Sigmoid colon (tissue), 7 donors: ENCODE measurements at regions of chr19 and their contacts with region 1.

Region 1: GRCh38 chr19:29610563-29611271 is 4.6 kb downstream of the POP4 start:
- DNase-seq: peak; percentile 89
- H3K4me3 ChIP-seq: no peak overlapping the region
- H3K27ac ChIP-seq: no peak overlapping the region
- H3K4me1 ChIP-seq: peaks cover 0 to 11% (median 8%) of the 10 kb centered on the region in 4 donors
- H3K27me3 ChIP-seq: no peaks in the 10 kb centered on the region
- CTCF ChIP-seq: peak; percentile 70 to 81 (median 74)
- EP300 ChIP-seq: no peak
- POLR2A ChIP-seq: no peak

Region 2: GRCh38 chr19:29212648-29213573 is 397.8 kb before region 1 on chr19 and contains the start of gene UQCRFS1:
- intact Hi-C with region 1: loop called (anchors 5 kb)
- DNase-seq: peak; percentile 97
- H3K4me3 ChIP-seq: peak within 1 kb of the TSS; percentile 82 to 99 (median 91)
- H3K27ac ChIP-seq: peak within 1 kb of the TSS; percentile 93 to 98 (median 96)
- H3K4me1 ChIP-seq: peaks cover 0 to 36% (median 25%) of the 10 kb centered on the region in 4 donors
- H3K27me3 ChIP-seq: no peaks in the 10 kb centered on the region
- CTCF ChIP-seq: no peak
- EP300 ChIP-seq: peak in 1 of 4 donors; percentile 58
- POLR2A ChIP-seq: peak; percentile 66 to 72
- total RNA-seq, gene UQCRFS1: 30.2 to 46.4 (median 41.4) TPM

Region 3: GRCh38 chr19:29665215-29665825 is 54.6 kb after region 1 on chr19 and contains the start of gene PLEKHF1:
- intact Hi-C with region 1: loop called (anchors 2 kb)
- DNase-seq: peak; percentile 95
- H3K4me3 ChIP-seq: peak within 1 kb of the TSS; percentile 76 to 93 (median 85)
- H3K27ac ChIP-seq: peak within 1 kb of the TSS; percentile 84 to 93 (median 92)
- H3K4me1 ChIP-seq: peaks cover 0 to 82% (median 76%) of the 10 kb centered on the region in 4 donors
- H3K27me3 ChIP-seq: no peaks in the 10 kb centered on the region
- CTCF ChIP-seq: no peak
- EP300 ChIP-seq: no peak
- POLR2A ChIP-seq: no peak
- total RNA-seq, gene PLEKHF1: 19.4 to 34.6 (median 22.6) TPM

Region 4: GRCh38 chr19:29714953-29715700 is 104.4 kb after region 1 on chr19 and contains the start of gene C19orf12:
- intact Hi-C with region 1: loop called (anchors 1 kb)
- DNase-seq: peak; percentile 76
- H3K4me3 ChIP-seq: peak within 1 kb of the TSS; percentile 73 to 98 (median 87)
- H3K27ac ChIP-seq: peak within 1 kb of the TSS; percentile 90 to 97 (median 92)
- H3K4me1 ChIP-seq: peaks cover 0 to 53% (median 34%) of the 10 kb centered on the region in 4 donors
- H3K27me3 ChIP-seq: no peaks in the 10 kb centered on the region
- CTCF ChIP-seq: no peak
- EP300 ChIP-seq: no peak
- POLR2A ChIP-seq: peak; percentile 38 to 68
- total RNA-seq, gene C19orf12: 32.1 to 36.0 (median 34.2) TPM

Region 5: GRCh38 chr19:29811125-29812079 is 200.7 kb after region 1 on chr19 and contains the start of gene CCNE1:
- intact Hi-C with region 1: loop called (anchors 10 kb)
- DNase-seq: peak; percentile 96
- H3K4me3 ChIP-seq: peak within 1 kb of the TSS; percentile 38 to 75 (median 60)
- H3K27ac ChIP-seq: peak within 1 kb of the TSS; percentile 55 to 73 (median 68)
- H3K4me1 ChIP-seq: peaks cover 0 to 15% (median 10%) of the 10 kb centered on the region in 4 donors
- H3K27me3 ChIP-seq: no peaks in the 10 kb centered on the region
- CTCF ChIP-seq: no peak
- EP300 ChIP-seq: no peak
- POLR2A ChIP-seq: no peak
- total RNA-seq, gene CCNE1: 2.3 to 13.8 (median 3.6) TPM

Region 6: DNA sequence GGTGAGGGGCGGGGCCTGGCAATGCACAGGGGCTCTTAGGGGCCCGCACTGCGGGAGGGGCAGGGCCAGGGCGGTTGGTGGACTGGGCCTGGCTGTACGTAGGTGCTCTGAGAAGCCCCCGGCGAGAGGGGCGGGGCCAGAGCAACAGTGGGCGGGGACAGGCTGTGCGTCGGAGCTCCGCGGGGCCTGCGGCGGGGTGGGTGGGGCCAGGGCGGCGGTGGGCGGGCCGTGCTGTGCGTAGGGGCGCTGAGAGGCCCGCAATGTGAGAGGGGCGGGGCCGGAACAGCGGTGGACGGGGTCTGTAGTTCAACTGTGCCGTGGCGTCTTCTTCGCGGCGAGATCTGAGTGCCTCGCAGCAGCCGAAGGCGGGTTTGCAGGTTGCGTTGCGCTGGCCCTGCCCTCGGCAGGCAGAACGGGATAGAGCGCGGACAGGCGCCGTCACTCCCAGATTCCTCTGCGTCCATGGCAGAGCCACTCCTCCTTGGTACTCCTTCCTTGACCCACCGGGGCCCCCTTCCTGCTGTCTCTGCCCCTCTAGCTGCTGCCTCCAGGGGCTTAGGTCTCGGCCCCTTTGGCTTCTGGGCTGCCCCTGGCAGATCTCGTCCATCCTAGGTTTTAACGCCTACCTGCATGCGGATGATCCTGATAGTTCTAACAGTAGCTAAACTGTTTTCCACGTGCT is 234.3 kb after region 1 on chr19:
- intact Hi-C with region 1: loop called (anchors 10 kb)
- DNase-seq: peak; percentile 97
- H3K4me3 ChIP-seq: peak overlapping the region; percentile 43 to 86 (median 74)
- H3K27ac ChIP-seq: peak overlapping the region; percentile 87 to 93 (median 90)
- H3K4me1 ChIP-seq: peaks cover 0 to 25% (median 23%) of the 10 kb centered on the region in 4 donors
- H3K27me3 ChIP-seq: no peaks in the 10 kb centered on the region
- CTCF ChIP-seq: no peak
- EP300 ChIP-seq: no peak
- POLR2A ChIP-seq: peak in 1 of 2 donors; percentile 34